B cell (primary cell): ENCODE measurements at regions of chr12 and their contacts with region 1.

Region 1: DNA sequence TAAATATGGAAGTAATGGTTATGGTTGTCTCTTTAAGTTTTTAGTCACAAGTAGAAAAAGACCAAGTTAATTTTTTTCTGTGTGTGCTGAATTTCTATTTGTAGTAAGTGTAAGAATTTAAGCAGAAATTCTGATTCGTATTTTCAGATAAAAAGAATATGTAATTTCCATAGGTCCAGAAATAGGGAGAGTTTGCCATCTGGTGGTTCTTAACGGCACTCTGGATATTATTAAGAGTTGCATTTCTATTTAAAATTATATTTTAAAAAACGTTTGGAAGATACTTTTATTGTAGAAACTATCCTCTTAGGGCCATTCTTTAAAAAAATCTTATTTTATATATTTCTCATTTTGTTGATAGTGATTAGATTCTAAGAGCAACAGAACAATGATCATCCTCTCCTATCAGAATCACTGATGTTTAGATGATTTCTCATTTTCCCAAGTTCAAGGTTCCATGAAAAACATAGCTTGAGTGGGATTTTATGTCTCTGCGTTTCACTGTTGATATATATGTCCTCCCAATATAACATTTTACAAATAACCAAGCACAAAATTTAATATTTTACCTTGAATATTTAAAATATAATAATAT is 88.3 kb downstream of the LRRK2 start:
- DNase-seq: peak; percentile 51
- ATAC-seq: no peak
- H3K4me3 ChIP-seq: no peak overlapping the region
- H3K4me3 Mint-ChIP-seq: no peak overlapping the region
- H3K27ac ChIP-seq: peak overlapping the region in 1 of 2 donors; percentile 13
- H3K27ac Mint-ChIP-seq: no peak overlapping the region
- H3K4me1 ChIP-seq: peaks cover 13 to 15% of the 10 kb centered on the region in 2 donors
- H3K4me1 Mint-ChIP-seq: peaks cover 26% of the 10 kb centered on the region
- H3K27me3 ChIP-seq: no peaks in the 10 kb centered on the region
- H3K27me3 Mint-ChIP-seq: no peaks in the 10 kb centered on the region
- CTCF ChIP-seq: peak; percentile 78

Region 2: DNA sequence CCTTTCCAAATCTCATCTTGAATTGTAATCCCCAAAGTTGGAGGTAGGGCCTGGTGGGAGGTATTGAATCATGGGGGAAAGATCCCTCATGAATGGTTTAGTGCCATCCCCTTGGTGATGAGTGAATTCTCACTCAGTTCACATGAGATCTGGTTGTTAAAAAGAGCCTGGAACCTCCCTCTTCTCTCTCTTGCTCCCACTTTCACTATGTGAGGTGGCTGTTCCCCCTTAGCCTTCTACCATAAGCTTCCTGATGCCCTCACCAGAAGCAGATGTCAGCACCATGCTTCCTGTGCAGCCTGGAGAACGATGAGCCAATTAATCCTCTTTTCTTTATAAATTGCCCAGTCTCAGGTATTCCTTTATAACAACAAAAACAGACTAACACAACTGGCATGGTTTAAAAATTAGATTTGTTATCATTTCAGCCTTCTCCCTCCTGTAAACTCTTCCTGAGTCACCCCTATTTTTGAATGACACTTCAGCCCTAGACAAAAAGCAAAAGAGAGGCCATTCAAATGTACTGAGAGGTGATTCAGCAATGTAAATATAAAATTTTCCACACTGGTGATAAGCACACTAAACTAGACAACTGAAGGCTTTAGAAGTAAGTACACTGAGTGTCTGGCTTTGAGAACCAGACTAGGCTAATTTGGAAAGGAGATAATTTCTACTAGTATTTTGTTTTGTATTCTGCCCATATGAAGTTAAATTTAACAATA is 481.3 kb before region 1 on chr12:
- CTCF ChIA-PET with region 1: no interaction called
- POLR2A ChIA-PET with region 1: no interaction called
- intact Hi-C with region 1: no loop called
- DNase-seq: no peak
- ATAC-seq: no peak
- H3K4me3 ChIP-seq: no peak overlapping the region
- H3K4me3 Mint-ChIP-seq: no peak overlapping the region
- H3K27ac ChIP-seq: no peak overlapping the region
- H3K27ac Mint-ChIP-seq: no peak overlapping the region
- H3K4me1 ChIP-seq: peaks cover 0 to 3% of the 10 kb centered on the region in 2 donors
- H3K4me1 Mint-ChIP-seq: peaks cover 5% of the 10 kb centered on the region
- H3K27me3 ChIP-seq: no peaks in the 10 kb centered on the region
- H3K27me3 Mint-ChIP-seq: no peaks in the 10 kb centered on the region
- CTCF ChIP-seq: no peak

Region 3: DNA sequence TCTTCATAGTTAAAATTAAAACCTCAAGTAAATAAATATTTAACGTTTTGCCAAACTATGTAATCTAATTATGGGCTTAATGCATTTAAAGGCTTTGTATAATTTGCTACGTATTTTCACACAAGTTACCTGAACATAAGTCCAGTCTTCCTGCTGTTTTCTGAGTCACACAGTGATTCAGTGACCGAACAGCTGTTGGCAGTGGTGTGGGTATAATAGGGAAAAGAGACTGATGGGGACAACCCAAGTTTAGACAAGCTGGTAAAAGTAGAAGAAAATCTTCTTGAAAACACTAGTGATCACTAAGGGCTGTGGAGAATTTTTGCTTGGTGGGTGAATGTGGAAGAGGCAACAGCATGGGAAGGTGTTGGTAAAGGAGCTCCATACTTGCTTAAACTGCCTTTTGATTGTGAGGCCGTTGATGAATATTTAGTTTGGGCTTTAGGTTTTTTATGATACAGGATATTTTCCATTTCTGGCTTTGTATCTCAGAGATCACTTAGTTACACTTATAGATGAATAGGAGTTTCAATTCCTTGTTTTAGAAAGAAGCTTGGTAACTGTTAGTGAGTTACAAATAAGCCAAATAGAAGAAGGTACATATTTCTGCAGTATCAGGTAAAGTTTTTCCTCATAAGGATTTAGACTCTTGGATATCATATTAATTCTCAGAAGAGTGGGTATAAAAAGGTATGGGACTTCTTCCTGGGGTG is 64.3 kb before region 1 on chr12:
- CTCF ChIA-PET with region 1: interaction called, 4 read pairs
- POLR2A ChIA-PET with region 1: no interaction called
- intact Hi-C with region 1: loop called (anchors 5 kb)
- DNase-seq: peak; percentile 40
- ATAC-seq: peak; percentile 54
- H3K4me3 ChIP-seq: peak overlapping the region in 1 of 5 experiments; percentile 21
- H3K4me3 Mint-ChIP-seq: peak overlapping the region; percentile 62
- H3K27ac ChIP-seq: peak overlapping the region; percentile 34 to 67
- H3K27ac Mint-ChIP-seq: peak overlapping the region; percentile 85
- H3K4me1 ChIP-seq: peaks cover 9 to 17% of the 10 kb centered on the region in 2 donors
- H3K4me1 Mint-ChIP-seq: peaks cover 27% of the 10 kb centered on the region
- H3K27me3 ChIP-seq: no peaks in the 10 kb centered on the region
- H3K27me3 Mint-ChIP-seq: no peaks in the 10 kb centered on the region
- CTCF ChIP-seq: no peak

Region 4: DNA sequence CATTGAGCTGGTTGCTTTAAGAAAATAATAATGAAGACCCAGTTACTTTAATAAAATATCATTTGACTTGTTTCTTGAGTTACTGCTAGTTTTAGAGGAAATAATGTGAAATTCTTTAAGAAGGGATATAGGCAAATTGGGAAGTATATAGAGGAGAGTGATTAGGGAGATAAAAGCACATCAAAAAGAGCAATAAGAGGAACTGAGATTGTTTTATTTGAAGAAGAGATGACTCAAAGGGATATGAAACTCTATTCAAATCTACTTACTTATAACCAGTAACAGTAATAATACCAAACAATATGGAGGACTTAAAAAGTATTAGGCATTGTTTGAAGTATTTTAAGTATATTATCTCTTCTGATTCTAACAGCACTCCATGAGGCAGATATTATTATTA is 51.1 kb before region 1 on chr12:
- CTCF ChIA-PET with region 1: interaction called, 4 read pairs
- POLR2A ChIA-PET with region 1: no interaction called
- intact Hi-C with region 1: loop called (anchors 5 kb)
- DNase-seq: peak; percentile 56
- ATAC-seq: peak; percentile 78
- H3K4me3 ChIP-seq: no peak overlapping the region
- H3K4me3 Mint-ChIP-seq: peak overlapping the region; percentile 44
- H3K27ac ChIP-seq: peak overlapping the region in 1 of 2 donors; percentile 32
- H3K27ac Mint-ChIP-seq: peak overlapping the region; percentile 0
- H3K4me1 ChIP-seq: peaks cover 20 to 32% of the 10 kb centered on the region in 2 donors
- H3K4me1 Mint-ChIP-seq: peaks cover 30% of the 10 kb centered on the region
- H3K27me3 ChIP-seq: no peaks in the 10 kb centered on the region
- H3K27me3 Mint-ChIP-seq: no peaks in the 10 kb centered on the region
- CTCF ChIP-seq: no peak

Region 5: GRCh38 chr12:40300490-40300889 is 12.6 kb before region 1 on chr12:
- CTCF ChIA-PET with region 1: interaction called, 13 read pairs
- POLR2A ChIA-PET with region 1: no interaction called
- intact Hi-C with region 1: no loop called
- DNase-seq: no peak
- ATAC-seq: no peak
- H3K4me3 ChIP-seq: no peak overlapping the region
- H3K4me3 Mint-ChIP-seq: no peak overlapping the region
- H3K27ac ChIP-seq: no peak overlapping the region
- H3K27ac Mint-ChIP-seq: no peak overlapping the region
- H3K4me1 ChIP-seq: no peaks in the 10 kb centered on the region
- H3K4me1 Mint-ChIP-seq: no peaks in the 10 kb centered on the region
- H3K27me3 ChIP-seq: no peaks in the 10 kb centered on the region
- H3K27me3 Mint-ChIP-seq: no peaks in the 10 kb centered on the region
- CTCF ChIP-seq: no peak

Region 6: GRCh38 chr12:40325349-40325960 is 12.4 kb after region 1 on chr12:
- CTCF ChIA-PET with region 1: interaction called, 39 read pairs
- POLR2A ChIA-PET with region 1: no interaction called
- intact Hi-C with region 1: no loop called
- DNase-seq: peak; percentile 17
- ATAC-seq: peak; percentile 74
- H3K4me3 ChIP-seq: no peak overlapping the region
- H3K4me3 Mint-ChIP-seq: no peak overlapping the region
- H3K27ac ChIP-seq: no peak overlapping the region
- H3K27ac Mint-ChIP-seq: peak overlapping the region; percentile 7
- H3K4me1 ChIP-seq: no peaks in the 10 kb centered on the region
- H3K4me1 Mint-ChIP-seq: peaks cover 10% of the 10 kb centered on the region
- H3K27me3 ChIP-seq: no peaks in the 10 kb centered on the region
- H3K27me3 Mint-ChIP-seq: no peaks in the 10 kb centered on the region
- CTCF ChIP-seq: peak; percentile 68